ENCODE measurements at regions of chr17 and their contacts with region 1.

Region 1: GRCh38 chr17:4939796-4940624 is at the starts of genes RNF167 and SLC25A11:
- DNase-seq: peak; percentile 100
- ATAC-seq: peak; percentile 79
- H3K4me3 ChIP-seq: peak within 1 kb of the TSS; percentile 91 to 97 (median 93)
- H3K27ac ChIP-seq: peak within 1 kb of the TSS; percentile 96
- H3K4me1 ChIP-seq: peaks cover 30% of the 10 kb centered on the region
- H3K27me3 ChIP-seq: no peaks in the 10 kb centered on the region; a peak in 1 of 5 replicates
- CTCF ChIP-seq: no peak
- EP300 ChIP-seq: no peak
- POLR2A ChIP-seq: peak; percentile 67 to 90
- RAD21 ChIP-seq: peak; percentile 57
- total RNA-seq, gene RNF167: 35.7 and 44.1 TPM in 2 replicates
- total RNA-seq, gene SLC25A11: 47.2 and 47.9 TPM in 2 replicates

Region 2: DNA sequence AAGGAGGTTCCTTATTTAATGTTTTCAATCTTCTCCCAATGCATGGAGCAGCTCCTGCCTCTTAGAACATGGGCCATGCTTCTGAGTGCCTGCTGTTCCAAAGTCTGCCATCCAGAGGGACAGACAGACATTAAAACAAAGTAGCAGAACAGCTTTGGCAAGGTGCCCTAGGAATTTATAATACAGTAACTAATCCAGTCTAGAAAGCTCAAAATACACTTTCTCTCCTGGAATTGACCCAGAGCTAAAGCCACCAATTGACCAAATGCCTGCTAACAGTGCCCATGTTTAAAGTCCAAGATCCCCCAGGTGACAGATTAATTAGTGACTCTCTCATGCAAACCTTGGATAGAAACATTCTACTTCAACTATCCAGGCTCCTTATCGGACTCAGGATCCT is 26.0 kb before region 1 on chr17:
- CTCF ChIA-PET with region 1: interaction called, 10 read pairs
- POLR2A ChIA-PET with region 1: interaction called, 58 read pairs
- in situ Hi-C with region 1: no loop called
- intact Hi-C with region 1: no loop called
- DNase-seq: peak; percentile 63
- ATAC-seq: no peak; the same call in none of the 3 replicates
- H3K4me3 ChIP-seq: peak overlapping the region in 1 of 3 experiments; percentile 22; a peak in 2 of 6 replicates
- H3K27ac ChIP-seq: peak overlapping the region; percentile 42
- H3K4me1 ChIP-seq: peaks cover 46% of the 10 kb centered on the region
- H3K27me3 ChIP-seq: no peaks in the 10 kb centered on the region
- CTCF ChIP-seq: no peak
- EP300 ChIP-seq: no peak
- POLR2A ChIP-seq: no peak
- RAD21 ChIP-seq: no peak

Region 3: GRCh38 chr17:4920351-4921048 is 19.5 kb before region 1 on chr17:
- CTCF ChIA-PET with region 1: no interaction called
- POLR2A ChIA-PET with region 1: interaction called, 35 read pairs
- in situ Hi-C with region 1: no loop called
- intact Hi-C with region 1: no loop called
- DNase-seq: peak; percentile 65
- ATAC-seq: peak; percentile 95
- H3K4me3 ChIP-seq: peak overlapping the region; percentile 14 to 57 (median 26)
- H3K27ac ChIP-seq: peak overlapping the region; percentile 53
- H3K4me1 ChIP-seq: peaks cover 22% of the 10 kb centered on the region
- H3K27me3 ChIP-seq: no peaks in the 10 kb centered on the region
- CTCF ChIP-seq: no peak
- EP300 ChIP-seq: no peak
- POLR2A ChIP-seq: peak in 1 of 2 experiments; percentile 14; a peak in 1 of 4 replicates
- RAD21 ChIP-seq: no peak

Region 4: DNA sequence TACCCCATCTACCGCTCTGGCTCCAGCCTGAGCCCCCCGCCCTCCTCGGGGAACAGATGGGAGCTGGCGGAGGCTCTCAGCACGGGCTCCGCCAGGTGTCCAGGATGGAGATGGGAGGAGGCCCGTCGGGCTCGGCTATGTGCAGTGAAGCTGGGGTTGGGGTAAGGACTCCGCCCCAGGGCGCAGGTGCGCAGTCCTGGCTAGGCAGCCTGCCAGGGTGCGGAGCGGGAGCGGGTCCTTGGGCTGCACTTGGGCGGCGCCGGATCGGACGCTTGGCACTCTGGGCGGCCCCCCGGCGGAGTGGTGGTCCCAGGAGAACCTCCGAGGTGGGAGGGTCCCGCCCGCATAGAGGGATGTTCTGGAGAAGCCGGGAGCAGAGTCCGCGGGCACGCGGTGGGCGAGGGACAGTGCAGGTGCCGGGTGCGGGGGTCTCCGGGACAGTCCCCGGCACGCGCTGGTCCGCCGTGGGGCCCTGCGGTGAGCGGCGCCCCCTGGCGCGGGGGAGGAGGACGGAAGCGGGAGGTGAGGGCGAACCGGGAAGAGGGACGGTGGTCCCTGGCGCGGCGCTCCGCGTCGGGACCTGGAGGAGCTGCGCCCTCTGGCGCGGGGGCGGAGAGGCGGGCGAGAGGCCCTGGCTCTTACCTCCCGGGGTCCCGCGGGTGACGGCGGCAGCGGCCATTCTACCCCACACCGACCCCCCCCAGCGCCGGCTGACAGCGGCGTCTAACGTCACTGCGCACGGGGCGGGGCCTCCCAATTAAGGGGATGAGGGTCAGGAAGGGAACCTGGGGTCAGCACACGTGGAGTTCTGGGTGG is 47.1 kb after region 1 on chr17 and contains the start of gene CAMTA2:
- CTCF ChIA-PET with region 1: no interaction called
- POLR2A ChIA-PET with region 1: interaction called, 12 read pairs
- in situ Hi-C with region 1: no loop called
- intact Hi-C with region 1: no loop called
- DNase-seq: peak; percentile 72
- ATAC-seq: peak; percentile 79
- H3K4me3 ChIP-seq: peak within 1 kb of the TSS; percentile 80 to 87 (median 84)
- H3K27ac ChIP-seq: peak within 1 kb of the TSS; percentile 55
- H3K4me1 ChIP-seq: peaks cover 30% of the 10 kb centered on the region
- H3K27me3 ChIP-seq: no peaks in the 10 kb centered on the region
- CTCF ChIP-seq: peak; percentile 87
- EP300 ChIP-seq: peak in 1 of 2 experiments; percentile 34; a peak in 2 of 4 replicates
- POLR2A ChIP-seq: peak in 1 of 2 experiments; percentile 12; a peak in 2 of 4 replicates
- RAD21 ChIP-seq: peak; percentile 85
- total RNA-seq, gene CAMTA2: 4.0 and 4.1 TPM in 2 replicates

Measured in HepG2 (cell line).